Posterior vena cava (tissue), 2 donors: ENCODE measurements at regions of chr1 and their contacts with region 1.

Region 1: GRCh38 chr1:155227261-155228095 is 19.0 kb downstream of the MTX1 start:
- DNase-seq: peak; percentile 99

Region 2: GRCh38 chr1:155172732-155173477 is 54.6 kb before region 1 on chr1 and contains the start of gene KRTCAP2:
- intact Hi-C with region 1: loop called (anchors 2 to 10 kb)
- DNase-seq: peak; percentile 99
- total RNA-seq, gene KRTCAP2: 145 to 146 TPM

Region 3: DNA sequence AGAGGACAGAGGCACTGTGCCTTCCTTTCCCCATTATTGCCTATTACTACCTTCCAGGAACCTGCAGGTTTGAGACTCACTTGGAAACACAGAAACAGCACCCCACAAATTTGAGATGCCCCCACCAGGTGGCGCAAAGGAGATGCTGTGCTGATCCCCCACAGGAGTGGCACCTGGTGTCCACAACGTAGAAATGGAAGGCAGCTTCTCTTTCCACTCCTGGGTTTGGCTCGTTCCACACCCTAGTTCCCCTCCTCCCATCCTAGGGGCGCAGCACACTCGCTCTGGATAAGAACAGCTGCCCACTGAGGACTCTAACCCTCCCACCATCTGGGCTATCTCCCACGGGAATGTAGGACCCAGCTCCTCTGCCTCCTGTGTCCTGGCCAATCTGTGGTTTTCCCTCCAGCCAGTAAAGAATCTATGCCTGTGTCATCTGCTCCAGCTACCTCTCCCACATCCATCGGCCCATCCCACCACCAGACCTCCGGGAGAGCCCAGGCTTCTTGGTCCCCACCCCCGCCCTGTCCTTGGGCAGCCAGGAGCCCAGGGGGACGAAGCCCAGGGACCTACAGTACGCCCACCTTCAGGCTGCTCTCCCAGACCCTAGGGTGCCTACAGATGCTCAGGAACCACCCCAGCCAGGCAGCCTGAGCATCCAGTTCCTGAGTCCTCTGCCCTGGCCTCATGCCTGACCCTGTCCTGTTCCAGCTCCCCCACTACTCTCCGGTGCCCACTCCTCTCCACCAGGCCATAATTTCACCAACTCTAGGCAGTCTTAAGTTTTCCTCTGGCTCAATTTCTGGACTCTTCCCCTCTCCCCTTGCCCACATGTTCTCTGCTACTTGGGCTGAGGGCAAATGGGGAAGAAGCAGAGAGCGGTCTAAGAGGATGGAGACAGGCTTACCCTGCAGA is 20.3 kb before region 1 on chr1:
- intact Hi-C with region 1: loop called in 1 of 2 experiments (anchors 2 kb)
- DNase-seq: peak; percentile 93

Region 4: GRCh38 chr1:155688324-155689080 is 461.0 kb after region 1 on chr1 and contains the start of gene YY1AP1:
- intact Hi-C with region 1: no loop called
- DNase-seq: peak; percentile 98
- total RNA-seq, gene YY1AP1: 62.4 to 73.7 TPM

Region 5: GRCh38 chr1:155759966-155760630 is 532.6 kb after region 1 on chr1:
- intact Hi-C with region 1: no loop called
- DNase-seq: no peak